Spleen (tissue), 13 donors: ENCODE measurements at regions of chr19 and their contacts with region 1.

Region 1: GRCh38 chr19:37906869-37907734 is at the start of gene SIPA1L3:
- DNase-seq: peak; percentile 99
- H3K4me3 ChIP-seq: peak within 1 kb of the TSS; percentile 69 to 100 (median 96)
- H3K27ac ChIP-seq: peak within 1 kb of the TSS; percentile 66 to 91 (median 84)
- H3K4me1 ChIP-seq: peaks cover 16 to 58% (median 39%) of the 10 kb centered on the region in 6 donors
- H3K27me3 ChIP-seq: no peaks in the 10 kb centered on the region
- CTCF ChIP-seq: peak in 2 of 11 experiments; percentile 37 to 41
- POLR2A ChIP-seq: peak in 1 of 3 donors; percentile 9
- total RNA-seq, gene SIPA1L3: 35.9 to 62.6 (median 45.1) TPM

Region 2: DNA sequence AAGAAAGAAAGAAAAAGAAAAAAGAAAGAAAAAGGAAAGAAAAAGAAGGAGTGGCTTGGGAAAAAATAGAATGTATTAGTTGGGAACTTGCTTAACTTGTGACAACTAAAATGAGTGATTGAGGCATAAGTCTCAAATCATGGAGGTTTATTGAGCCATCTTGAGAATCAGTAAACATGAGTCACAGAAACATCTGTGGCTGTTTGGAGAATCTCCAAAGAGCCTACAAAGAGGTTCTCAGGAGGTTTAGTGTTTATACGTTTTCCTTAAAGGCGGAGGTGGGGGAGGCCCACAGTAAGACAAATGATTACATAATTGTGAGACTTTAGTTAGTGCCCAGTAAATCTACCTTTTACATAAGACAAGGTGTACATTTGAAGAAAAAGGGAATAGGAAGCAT is 39.3 kb before region 1 on chr19:
- intact Hi-C with region 1: no loop called
- DNase-seq: no peak
- H3K4me3 ChIP-seq: no peak overlapping the region
- H3K27ac ChIP-seq: no peak overlapping the region
- H3K4me1 ChIP-seq: no peaks in the 10 kb centered on the region
- H3K27me3 ChIP-seq: peaks cover 0 to 5% (median 0%) of the 10 kb centered on the region in 7 donors
- CTCF ChIP-seq: no peak
- POLR2A ChIP-seq: no peak

Region 3: GRCh38 chr19:38062959-38063761 is 156.1 kb after region 1 on chr19:
- intact Hi-C with region 1: no loop called
- DNase-seq: no peak
- H3K4me3 ChIP-seq: no peak overlapping the region
- H3K27ac ChIP-seq: no peak overlapping the region
- H3K4me1 ChIP-seq: peaks cover 0 to 30% (median 14%) of the 10 kb centered on the region in 6 donors
- H3K27me3 ChIP-seq: no peaks in the 10 kb centered on the region
- CTCF ChIP-seq: no peak
- POLR2A ChIP-seq: no peak

Region 4: DNA sequence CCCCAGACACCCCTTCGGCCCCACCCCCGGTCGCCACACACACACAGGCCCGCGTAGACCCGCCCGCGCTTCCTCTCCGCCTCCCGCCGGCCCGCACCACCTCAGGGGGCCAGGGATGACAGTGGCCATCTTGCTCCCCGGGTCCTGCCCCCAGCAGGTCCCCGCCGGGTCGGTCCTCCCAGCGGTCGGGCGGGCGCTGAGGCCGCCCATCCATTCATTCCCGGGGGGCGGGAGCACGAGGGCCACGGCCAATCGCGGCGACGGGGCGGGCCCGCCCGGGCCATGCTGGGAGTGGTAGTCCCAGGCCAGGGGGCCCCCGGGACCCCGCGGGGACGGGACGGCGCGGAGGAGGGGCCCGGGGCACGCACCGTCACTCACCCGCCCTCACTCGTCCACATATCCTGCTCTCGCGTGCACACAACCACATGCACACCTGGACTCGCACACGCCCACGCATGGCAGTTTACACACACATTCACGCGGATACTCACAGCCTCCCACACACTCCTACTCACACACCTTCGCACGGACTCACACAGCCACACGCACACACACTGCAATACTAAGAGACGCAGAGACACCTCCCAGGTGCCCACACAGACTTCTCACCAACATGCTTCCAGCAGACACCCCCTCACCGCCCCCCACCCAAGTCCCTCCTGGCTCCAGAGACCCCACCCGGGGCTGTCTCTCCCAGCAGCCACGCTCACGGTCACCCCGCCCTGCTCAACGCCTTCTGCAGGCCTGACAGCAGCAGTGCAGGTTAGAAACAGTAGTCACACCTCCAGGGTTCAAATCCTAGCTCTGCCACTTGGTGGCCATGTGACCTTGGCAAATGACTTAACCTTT is 317.1 kb after region 1 on chr19 and contains the start of gene DPF1:
- intact Hi-C with region 1: loop called (anchors 10 kb)
- DNase-seq: no peak
- H3K4me3 ChIP-seq: peak within 1 kb of the TSS; percentile 26 to 70 (median 36)
- H3K27ac ChIP-seq: no peak within 1 kb of the TSS
- H3K4me1 ChIP-seq: peaks cover 7 to 33% (median 26%) of the 10 kb centered on the region in 6 donors
- H3K27me3 ChIP-seq: peaks cover 11 to 100% (median 77%) of the 10 kb centered on the region in 7 donors
- CTCF ChIP-seq: no peak
- POLR2A ChIP-seq: no peak
- total RNA-seq, gene DPF1: not detected